GM12878 (cell line): ENCODE measurements at regions of chr1 and their contacts with region 1.

Region 1: GRCh38 chr1:39973503-39974135 is 18.7 kb downstream of the MFSD2A start:
- DNase-seq: no peak
- ATAC-seq: peak; percentile 87
- H3K4me3 ChIP-seq: no peak overlapping the region
- H3K27ac ChIP-seq: no peak overlapping the region
- H3K4me1 ChIP-seq: peaks cover 3% of the 10 kb centered on the region
- H3K27me3 ChIP-seq: no peaks in the 10 kb centered on the region
- CTCF ChIP-seq: peak; percentile 97
- EP300 ChIP-seq: no peak
- POLR2A ChIP-seq: no peak
- RAD21 ChIP-seq: peak; percentile 100

Region 2: GRCh38 chr1:39825432-39825951 is 148.1 kb before region 1 on chr1:
- CTCF ChIA-PET with region 1: interaction called, 4 read pairs
- POLR2A ChIA-PET with region 1: no interaction called
- RAD21 ChIA-PET with region 1: interaction called, 8 read pairs
- SMC1A ChIA-PET with region 1: no interaction called
- in situ Hi-C with region 1: loop called (anchors 5 kb)
- intact Hi-C with region 1: no loop called
- DNase-seq: peak; percentile 69
- ATAC-seq: peak; percentile 94
- H3K4me3 ChIP-seq: no peak overlapping the region
- H3K27ac ChIP-seq: peak overlapping the region; percentile 34
- H3K4me1 ChIP-seq: peaks cover 19% of the 10 kb centered on the region
- H3K27me3 ChIP-seq: no peaks in the 10 kb centered on the region
- CTCF ChIP-seq: no peak
- EP300 ChIP-seq: no peak
- POLR2A ChIP-seq: no peak
- RAD21 ChIP-seq: no peak

Region 3: GRCh38 chr1:39926343-39926793 is 47.3 kb before region 1 on chr1:
- CTCF ChIA-PET with region 1: interaction called, 261 read pairs
- POLR2A ChIA-PET with region 1: no interaction called
- RAD21 ChIA-PET with region 1: interaction called, 115 read pairs
- SMC1A ChIA-PET with region 1: interaction called, 157 read pairs
- in situ Hi-C with region 1: no loop called
- intact Hi-C with region 1: no loop called
- DNase-seq: no peak
- ATAC-seq: peak; percentile 41; the same call in 2 of the 3 replicates
- H3K4me3 ChIP-seq: no peak overlapping the region
- H3K27ac ChIP-seq: no peak overlapping the region
- H3K4me1 ChIP-seq: no peaks in the 10 kb centered on the region
- H3K27me3 ChIP-seq: no peaks in the 10 kb centered on the region
- CTCF ChIP-seq: no peak
- EP300 ChIP-seq: no peak
- POLR2A ChIP-seq: no peak
- RAD21 ChIP-seq: no peak

Region 4: GRCh38 chr1:39954816-39955546 is 18.6 kb before region 1 on chr1 and contains the start of gene MFSD2A:
- CTCF ChIA-PET with region 1: interaction called, 53 read pairs
- POLR2A ChIA-PET with region 1: interaction called, 16 read pairs
- RAD21 ChIA-PET with region 1: interaction called, 13 read pairs
- SMC1A ChIA-PET with region 1: interaction called, 16 read pairs
- in situ Hi-C with region 1: no loop called
- intact Hi-C with region 1: no loop called
- DNase-seq: peak; percentile 55
- ATAC-seq: peak; percentile 93
- H3K4me3 ChIP-seq: peak within 1 kb of the TSS; percentile 89
- H3K27ac ChIP-seq: peak within 1 kb of the TSS; percentile 74
- H3K4me1 ChIP-seq: peaks cover 14% of the 10 kb centered on the region
- H3K27me3 ChIP-seq: no peaks in the 10 kb centered on the region
- CTCF ChIP-seq: no peak
- EP300 ChIP-seq: no peak
- POLR2A ChIP-seq: peak; percentile 96
- RAD21 ChIP-seq: no peak
- polyA plus RNA-seq, gene MFSD2A: 0.84 to 1.9 TPM

Region 5: DNA sequence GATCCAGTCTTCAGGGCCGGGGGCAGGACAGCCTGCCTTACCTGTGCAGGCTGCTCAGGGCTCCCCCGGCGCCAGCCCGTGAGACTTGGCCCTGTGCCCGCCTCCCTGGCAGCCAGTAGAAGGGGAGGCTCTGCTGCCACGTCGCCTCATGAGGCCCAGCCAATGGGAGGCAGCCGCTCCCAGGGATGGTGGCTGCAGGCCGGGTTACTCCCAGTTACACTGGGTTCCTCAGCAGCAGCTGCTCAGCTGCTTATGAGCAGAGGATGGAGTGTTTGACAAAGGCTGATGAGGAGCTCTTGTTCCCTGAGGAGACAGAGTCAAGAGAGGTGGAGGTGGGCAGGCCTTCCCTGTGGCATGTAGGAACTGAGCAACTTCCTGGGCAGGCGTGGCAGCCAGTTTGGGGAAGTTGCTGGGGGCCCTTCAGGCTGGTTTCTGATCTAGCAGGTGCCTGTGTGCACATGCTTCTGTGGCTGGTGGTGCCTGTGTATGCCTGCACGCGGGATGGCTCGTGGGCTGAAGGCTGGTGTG is 13.1 kb before region 1 on chr1:
- CTCF ChIA-PET with region 1: interaction called, 53 read pairs
- POLR2A ChIA-PET with region 1: interaction called, 16 read pairs
- RAD21 ChIA-PET with region 1: interaction called, 13 read pairs
- SMC1A ChIA-PET with region 1: interaction called, 16 read pairs
- in situ Hi-C with region 1: no loop called
- intact Hi-C with region 1: no loop called
- DNase-seq: peak; percentile 58
- ATAC-seq: peak; percentile 80
- H3K4me3 ChIP-seq: peak overlapping the region; percentile 14; the same call in 1 of the 2 replicates
- H3K27ac ChIP-seq: peak overlapping the region; percentile 68
- H3K4me1 ChIP-seq: peaks cover 22% of the 10 kb centered on the region
- H3K27me3 ChIP-seq: no peaks in the 10 kb centered on the region
- CTCF ChIP-seq: no peak
- EP300 ChIP-seq: no peak
- POLR2A ChIP-seq: peak; percentile 71
- RAD21 ChIP-seq: no peak